ENCODE measurements at regions of chr5 and their contacts with region 1.

Region 1: DNA sequence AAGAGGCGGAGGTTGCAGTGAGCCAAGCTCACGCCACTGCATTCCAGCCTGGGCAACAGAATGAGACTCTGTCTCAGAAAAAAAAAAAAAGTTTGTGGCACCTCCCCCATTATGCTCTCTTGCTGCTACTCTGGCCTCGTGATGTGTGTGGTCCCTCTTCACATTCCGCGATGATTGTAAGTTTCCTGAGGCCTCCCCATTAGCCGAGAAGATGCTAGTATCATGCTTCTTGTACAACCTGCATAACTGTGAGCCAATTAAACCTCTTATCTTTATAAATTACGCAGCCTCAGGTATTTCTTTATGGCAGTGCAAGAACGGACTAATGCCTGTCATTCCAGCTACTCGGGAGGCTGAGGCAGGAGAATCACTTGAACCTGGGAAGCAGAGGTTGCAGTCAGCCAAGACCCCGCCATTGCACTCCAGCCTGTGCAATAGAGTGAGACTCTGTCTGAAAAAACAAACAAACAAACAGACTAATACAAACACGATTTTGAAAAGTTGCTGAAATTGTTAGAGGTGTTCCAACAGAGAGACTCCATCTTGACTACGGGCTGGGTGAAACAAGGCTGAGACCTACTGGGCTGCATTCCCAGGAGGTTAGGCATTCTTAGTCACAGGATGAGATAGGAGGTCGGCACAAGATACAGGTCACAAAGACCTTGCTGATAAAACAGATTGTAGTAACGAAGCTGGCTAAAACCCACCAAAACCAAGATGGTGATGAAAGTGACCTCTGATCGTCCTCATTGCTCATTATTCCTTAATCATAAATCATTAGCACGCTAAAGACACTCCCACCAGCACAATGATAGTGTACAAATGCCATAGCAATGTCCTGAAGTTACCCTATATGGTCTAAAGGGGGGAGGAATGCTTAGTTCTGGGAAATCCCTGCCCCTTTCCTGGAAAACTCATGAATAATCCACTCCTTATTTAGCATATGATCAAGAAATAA is 8.3 kb upstream of the AFF4 start:
- DNase-seq: no peak
- ATAC-seq: no peak
- H3K4me3 ChIP-seq: no peak overlapping the region
- H3K4me3 Mint-ChIP-seq: no peak overlapping the region
- H3K27ac ChIP-seq: no peak overlapping the region
- H3K27ac Mint-ChIP-seq: no peak overlapping the region
- H3K4me1 ChIP-seq: no peaks in the 10 kb centered on the region
- H3K4me1 Mint-ChIP-seq: no peaks in the 10 kb centered on the region
- H3K27me3 ChIP-seq: no peaks in the 10 kb centered on the region
- H3K27me3 Mint-ChIP-seq: peaks cover under 1% of the 10 kb centered on the region
- CTCF ChIP-seq: no peak

Region 2: DNA sequence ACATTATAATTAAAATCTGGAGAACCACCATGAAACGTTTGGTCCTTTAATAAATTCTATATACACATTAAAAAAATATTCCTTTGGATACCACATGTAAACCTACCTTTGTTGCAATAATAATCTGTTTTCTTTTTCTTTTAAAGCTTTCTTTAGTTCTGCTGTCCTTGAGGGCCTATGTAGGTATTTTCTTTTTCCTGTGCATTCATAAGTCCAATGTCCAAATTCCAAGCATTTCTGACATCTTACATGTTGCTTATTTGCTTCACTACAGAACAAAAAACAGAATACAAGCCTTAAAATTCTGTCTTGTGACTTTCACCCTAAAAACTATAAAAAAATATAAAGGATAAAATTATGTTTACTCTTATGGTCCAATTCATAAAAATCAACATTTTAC is 34.9 kb after region 1 on chr5:
- CTCF ChIA-PET with region 1: no interaction called
- POLR2A ChIA-PET with region 1: no interaction called
- intact Hi-C with region 1: loop called in 1 of 2 experiments (anchors 5 kb)
- DNase-seq: no peak
- ATAC-seq: no peak
- H3K4me3 ChIP-seq: no peak overlapping the region
- H3K4me3 Mint-ChIP-seq: no peak overlapping the region
- H3K27ac ChIP-seq: no peak overlapping the region
- H3K27ac Mint-ChIP-seq: no peak overlapping the region
- H3K4me1 ChIP-seq: no peaks in the 10 kb centered on the region
- H3K4me1 Mint-ChIP-seq: no peaks in the 10 kb centered on the region
- H3K27me3 ChIP-seq: no peaks in the 10 kb centered on the region
- H3K27me3 Mint-ChIP-seq: no peaks in the 10 kb centered on the region
- CTCF ChIP-seq: no peak

Measured in CD4-positive, alpha-beta T cell (primary cell).